Activated CD4-positive, alpha-beta memory T cell treated with anti-CD3 and anti-CD28 coated beads for 36 hours (primary cell): ENCODE measurements at regions of chr3 and their contacts with region 1.

Region 1: DNA sequence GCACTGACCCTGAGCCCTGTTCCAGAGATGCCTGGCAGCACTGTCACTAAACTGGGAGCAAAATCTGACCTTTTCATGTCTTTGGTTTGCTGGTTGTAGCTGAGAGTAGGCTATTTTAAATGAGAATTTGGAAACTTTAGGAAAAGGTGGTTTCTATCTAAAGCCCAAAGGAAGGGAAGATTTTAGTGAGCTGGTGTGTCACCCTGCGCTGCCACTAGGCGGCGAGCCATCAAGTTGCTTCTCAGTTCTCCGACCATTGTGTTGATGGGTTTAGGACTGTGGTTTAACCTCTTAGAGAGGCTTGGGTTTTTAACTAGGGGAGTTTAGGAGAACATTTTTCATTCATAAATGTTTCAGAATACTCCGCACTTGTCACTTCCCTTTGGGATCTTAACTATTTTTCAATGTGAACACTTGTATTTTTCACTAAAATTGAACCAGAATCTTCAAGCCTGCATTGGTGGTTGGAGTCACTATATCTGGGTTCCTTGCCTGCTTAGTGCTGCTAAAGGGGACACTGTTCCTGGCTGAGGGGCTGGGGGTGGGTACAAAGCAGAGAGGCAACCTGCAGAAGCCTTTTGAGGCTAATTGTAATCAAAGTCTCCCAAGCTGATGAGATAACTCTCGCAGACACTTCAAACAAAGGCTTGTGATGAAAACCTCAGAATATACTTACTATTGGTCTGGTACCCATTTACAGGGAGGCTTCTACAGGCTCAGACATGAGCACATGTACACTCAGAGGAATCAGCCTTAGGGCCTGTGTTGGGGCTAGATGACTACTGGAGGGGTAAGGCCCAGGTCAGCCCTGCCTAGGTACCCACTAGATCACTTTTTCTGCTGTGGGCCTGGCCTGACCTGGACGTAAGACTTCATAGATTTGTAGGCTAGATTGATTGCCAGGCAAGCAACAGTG is 16.8 kb downstream of the EXOSC7 start:
- DNase-seq: peak; percentile 36
- H3K4me3 Mint-ChIP-seq: no peak overlapping the region
- H3K27ac Mint-ChIP-seq: no peak overlapping the region
- H3K4me1 Mint-ChIP-seq: peaks cover 64% of the 10 kb centered on the region
- H3K27me3 Mint-ChIP-seq: no peaks in the 10 kb centered on the region

Region 2: DNA sequence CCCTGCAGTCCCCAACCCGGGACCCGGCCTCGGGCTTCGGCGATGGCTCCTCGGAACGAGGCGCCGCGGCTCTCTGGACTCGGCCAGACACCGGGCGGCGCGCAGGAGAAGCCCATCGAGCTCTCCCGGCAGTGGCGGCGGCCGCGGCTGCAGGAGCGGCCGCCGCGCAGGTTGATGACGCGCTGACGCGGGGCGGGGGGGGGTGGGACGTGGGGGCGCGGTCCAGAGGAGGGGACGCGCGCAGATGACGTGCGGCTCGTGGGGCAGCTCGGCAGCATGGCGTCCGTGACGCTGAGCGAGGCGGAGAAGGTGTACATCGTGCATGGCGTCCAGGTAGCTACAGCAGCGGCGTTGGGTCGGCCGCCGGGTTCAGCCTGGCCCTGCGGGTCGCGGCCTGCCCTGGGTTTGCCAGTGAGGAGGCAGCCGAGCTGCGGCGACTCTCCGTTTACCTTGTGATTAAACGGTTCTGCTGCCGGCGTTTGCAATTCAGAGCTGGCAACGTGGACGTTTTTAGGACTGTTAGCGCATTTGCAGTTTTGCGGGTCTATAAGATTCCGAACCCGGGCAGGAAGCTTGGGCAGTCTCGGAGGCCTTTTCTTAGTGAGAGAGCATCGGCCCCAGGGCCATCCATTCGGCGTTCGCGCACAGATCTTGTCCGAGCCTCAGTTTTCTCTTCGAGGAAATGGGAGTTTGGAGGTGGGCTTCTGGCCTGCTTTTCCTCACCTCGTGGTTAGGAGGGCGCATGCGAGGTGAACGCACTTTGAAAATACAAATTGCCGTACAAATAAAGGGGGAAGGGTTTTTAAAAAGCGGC is 16.6 kb before region 1 on chr3 and contains the starts of genes EXOSC7 and ZDHHC3:
- CTCF ChIA-PET with region 1: interaction called, 37 read pairs
- POLR2A ChIA-PET with region 1: interaction called, 5 read pairs
- intact Hi-C with region 1: loop called (anchors 2 kb)
- DNase-seq: peak; percentile 91
- H3K4me3 Mint-ChIP-seq: peak within 1 kb of the TSS; percentile 98
- H3K27ac Mint-ChIP-seq: peak within 1 kb of the TSS; percentile 85
- H3K4me1 Mint-ChIP-seq: peaks cover 56% of the 10 kb centered on the region
- H3K27me3 Mint-ChIP-seq: no peaks in the 10 kb centered on the region
- total RNA-seq, gene EXOSC7: 55.7 to 62.2 TPM
- total RNA-seq, gene ZDHHC3: 26.9 to 34.8 TPM

Region 3: DNA sequence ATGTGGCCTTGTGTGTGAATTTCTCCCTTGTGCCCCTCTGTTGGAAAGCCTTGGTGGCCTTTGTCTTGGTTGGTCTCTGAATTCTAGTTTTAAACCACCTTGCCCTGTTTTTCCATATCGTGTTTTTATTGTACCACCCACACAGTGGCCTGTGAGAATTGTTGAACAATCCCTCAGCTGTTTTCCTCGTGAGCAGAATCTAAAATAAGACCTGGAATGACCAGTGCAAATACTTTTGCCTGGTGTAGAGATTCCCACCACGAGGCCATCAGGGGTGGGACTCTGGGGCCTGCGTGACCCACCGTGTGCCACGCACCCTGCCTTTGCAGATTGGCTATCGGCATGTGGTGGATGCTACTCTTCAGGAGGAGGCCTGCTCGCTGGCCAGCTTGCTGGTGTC is 14.3 kb after region 1 on chr3:
- CTCF ChIA-PET with region 1: interaction called, 11 read pairs
- POLR2A ChIA-PET with region 1: interaction called, 3 read pairs
- intact Hi-C with region 1: no loop called
- DNase-seq: no peak
- H3K4me3 Mint-ChIP-seq: no peak overlapping the region
- H3K27ac Mint-ChIP-seq: no peak overlapping the region
- H3K4me1 Mint-ChIP-seq: peaks cover 30% of the 10 kb centered on the region
- H3K27me3 Mint-ChIP-seq: no peaks in the 10 kb centered on the region

Region 4: GRCh38 chr3:45026038-45026437 is 33.2 kb after region 1 on chr3 and contains the start of gene CLEC3B:
- CTCF ChIA-PET with region 1: no interaction called
- POLR2A ChIA-PET with region 1: no interaction called
- intact Hi-C with region 1: no loop called
- DNase-seq: no peak
- H3K4me3 Mint-ChIP-seq: no peak within 1 kb of the TSS
- H3K27ac Mint-ChIP-seq: no peak within 1 kb of the TSS
- H3K4me1 Mint-ChIP-seq: peaks cover 2% of the 10 kb centered on the region
- H3K27me3 Mint-ChIP-seq: peaks cover 5% of the 10 kb centered on the region
- total RNA-seq, gene CLEC3B: not detected